CD8-positive, alpha-beta T cell (primary cell): ENCODE measurements at regions of chr17 and their contacts with region 1.

Region 1: DNA sequence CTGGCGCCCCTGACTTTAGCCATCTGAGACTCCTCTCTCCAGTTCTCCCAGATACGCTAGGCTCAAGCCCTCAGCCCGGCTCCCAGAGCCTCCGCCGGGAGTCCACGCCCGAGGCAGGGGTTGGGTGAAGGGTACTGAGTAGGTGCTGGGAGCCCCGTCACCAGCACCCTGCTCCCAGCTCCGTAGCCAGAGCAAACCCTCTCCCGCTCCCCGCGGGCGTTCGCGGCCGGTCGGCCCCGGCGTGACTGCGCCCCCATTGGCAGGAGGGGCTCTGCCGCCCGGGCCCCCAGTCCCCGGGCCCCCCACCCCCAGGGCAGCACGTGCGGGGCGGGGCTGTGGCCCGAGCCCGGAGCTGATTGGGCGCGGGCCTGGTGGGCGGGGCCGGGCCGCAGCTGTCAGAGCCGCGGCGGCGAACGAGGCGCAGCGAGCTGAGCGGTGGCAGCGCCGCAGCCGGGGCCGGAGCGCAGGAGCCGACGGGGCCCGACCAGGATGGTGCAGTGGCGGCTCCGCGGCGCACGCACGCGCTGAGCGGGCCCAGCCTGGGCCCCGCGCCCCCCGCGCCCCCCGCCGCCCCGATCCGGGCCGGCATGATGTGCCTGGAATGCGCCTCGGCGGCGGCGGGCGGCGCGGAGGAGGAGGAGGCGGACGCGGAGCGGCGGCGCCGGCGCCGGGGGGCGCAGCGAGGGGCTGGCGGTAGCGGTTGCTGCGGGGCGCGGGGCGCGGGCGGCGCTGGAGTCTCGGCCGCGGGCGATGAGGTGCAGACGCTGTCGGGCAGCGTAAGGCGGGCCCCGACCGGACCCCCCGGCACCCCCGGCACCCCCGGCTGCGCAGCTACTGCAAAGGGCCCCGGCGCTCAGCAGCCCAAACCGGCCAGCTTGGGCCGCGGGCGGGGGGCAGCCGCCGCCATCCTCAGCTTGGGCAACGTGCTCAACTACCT is at the start of gene SPNS2:
- DNase-seq: peak; percentile 28 to 84 (median 61)
- ATAC-seq: peak; percentile 91
- H3K4me3 ChIP-seq: peak within 1 kb of the TSS; percentile 41 to 52
- H3K4me3 Mint-ChIP-seq: peak within 1 kb of the TSS; percentile 85
- H3K27ac ChIP-seq: no peak within 1 kb of the TSS
- H3K27ac Mint-ChIP-seq: no peak within 1 kb of the TSS
- H3K4me1 ChIP-seq: peaks cover 32% of the 10 kb centered on the region
- H3K4me1 Mint-ChIP-seq: peaks cover 29% of the 10 kb centered on the region
- H3K27me3 ChIP-seq: peaks cover 0 to 6% of the 10 kb centered on the region in 2 experiments
- H3K27me3 Mint-ChIP-seq: peaks cover 16% of the 10 kb centered on the region
- CTCF ChIP-seq: no peak
- total RNA-seq, gene SPNS2: 0.64 to 1.1 TPM

Region 2: GRCh38 chr17:4480929-4481898 is 17.5 kb before region 1 on chr17:
- CTCF ChIA-PET with region 1: interaction called, 5 read pairs
- POLR2A ChIA-PET with region 1: interaction called, 10 read pairs
- intact Hi-C with region 1: loop called in 1 of 2 experiments (anchors 2 kb)
- DNase-seq: peak in 8 of 9 experiments; percentile 18 to 76 (median 42)
- ATAC-seq: peak; percentile 77
- H3K4me3 ChIP-seq: peak overlapping the region; percentile 19 to 51
- H3K4me3 Mint-ChIP-seq: peak overlapping the region; percentile 81
- H3K27ac ChIP-seq: peak overlapping the region; percentile 40 to 77
- H3K27ac Mint-ChIP-seq: peak overlapping the region; percentile 95
- H3K4me1 ChIP-seq: peaks cover 56% of the 10 kb centered on the region
- H3K4me1 Mint-ChIP-seq: peaks cover 53% of the 10 kb centered on the region
- H3K27me3 ChIP-seq: no peaks in the 10 kb centered on the region
- H3K27me3 Mint-ChIP-seq: no peaks in the 10 kb centered on the region
- CTCF ChIP-seq: no peak

Region 3: GRCh38 chr17:4554997-4555799 is 56.5 kb after region 1 on chr17 and contains the start of gene MYBBP1A:
- CTCF ChIA-PET with region 1: no interaction called
- POLR2A ChIA-PET with region 1: no interaction called
- intact Hi-C with region 1: loop called in 1 of 2 experiments (anchors 5 kb)
- DNase-seq: peak; percentile 91 to 99 (median 98)
- ATAC-seq: peak; percentile 93
- H3K4me3 ChIP-seq: peak within 1 kb of the TSS; percentile 80 to 100
- H3K4me3 Mint-ChIP-seq: peak within 1 kb of the TSS; percentile 94
- H3K27ac ChIP-seq: peak within 1 kb of the TSS; percentile 77 to 88
- H3K27ac Mint-ChIP-seq: peak within 1 kb of the TSS; percentile 95
- H3K4me1 ChIP-seq: peaks cover 26% of the 10 kb centered on the region
- H3K4me1 Mint-ChIP-seq: peaks cover 27% of the 10 kb centered on the region
- H3K27me3 ChIP-seq: no peaks in the 10 kb centered on the region
- H3K27me3 Mint-ChIP-seq: no peaks in the 10 kb centered on the region
- CTCF ChIP-seq: no peak
- total RNA-seq, gene MYBBP1A: 69.8 to 71.8 TPM